ENCODE measurements at regions of chr17 and their contacts with region 1.

Region 1: DNA sequence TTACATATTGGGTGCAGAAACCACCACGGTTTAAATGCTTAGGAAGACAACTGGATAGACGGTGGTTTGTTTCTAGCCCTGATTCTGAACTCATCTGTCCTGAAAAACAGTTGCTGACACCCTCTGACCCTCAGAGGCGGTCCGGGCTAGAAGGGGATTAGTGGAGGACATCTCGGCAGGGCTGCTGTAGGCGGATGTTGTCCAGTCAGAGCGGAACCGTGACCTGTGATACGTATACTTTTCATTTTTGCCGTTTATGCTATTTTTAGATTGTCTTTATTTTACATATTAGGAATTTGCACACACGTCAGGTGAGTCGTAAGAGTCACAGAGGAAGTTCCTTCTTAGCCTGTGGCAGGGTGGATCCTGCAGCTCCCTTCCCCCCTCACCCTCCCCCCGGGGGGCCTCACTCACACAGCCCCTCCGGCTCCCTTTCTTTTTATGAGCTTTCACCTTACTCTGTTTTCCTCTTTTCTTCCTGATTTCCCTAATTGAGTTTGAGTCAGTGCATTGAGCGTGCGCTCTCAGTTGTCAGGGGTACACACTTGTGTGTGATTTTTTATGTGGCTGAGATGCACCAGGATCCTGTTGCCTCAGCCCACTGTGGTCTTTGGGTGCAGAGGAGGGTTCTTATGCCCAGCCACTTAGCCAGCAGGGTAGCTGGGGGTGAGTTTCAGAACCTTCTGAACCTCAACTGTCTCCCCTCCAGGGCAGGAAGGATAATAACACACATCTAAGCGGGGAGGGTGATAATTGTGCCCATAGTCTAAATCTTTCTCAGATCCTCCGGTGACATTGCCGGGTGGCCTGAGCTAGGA is 211.1 kb upstream of the CHMP6 start:
- DNase-seq: peak in 1 of 2 donors; percentile 25
- H3K4me3 ChIP-seq: peak overlapping the region in 1 of 3 donors; percentile 34
- H3K27ac ChIP-seq: peak overlapping the region; percentile 2 to 61
- H3K4me1 ChIP-seq: no peaks in the 10 kb centered on the region
- H3K27me3 ChIP-seq: no peaks in the 10 kb centered on the region
- CTCF ChIP-seq: no peak
- POLR2A ChIP-seq: no peak

Region 2: GRCh38 chr17:81083125-81083765 is 302.7 kb after region 1 on chr17:
- intact Hi-C with region 1: loop called (anchors 5 kb)
- DNase-seq: peak; percentile 60 to 84
- H3K4me3 ChIP-seq: peak overlapping the region in 1 of 3 donors; percentile 17
- H3K27ac ChIP-seq: peak overlapping the region; percentile 83 to 93
- H3K4me1 ChIP-seq: peaks cover 7 to 10% of the 10 kb centered on the region in 2 donors
- H3K27me3 ChIP-seq: no peaks in the 10 kb centered on the region
- CTCF ChIP-seq: no peak
- POLR2A ChIP-seq: no peak

Measured in breast epithelium (tissue), 4 donors.